Heart right ventricle (tissue), 16 donors: ENCODE measurements at regions of chr4 and their contacts with region 1.

Region 1: DNA sequence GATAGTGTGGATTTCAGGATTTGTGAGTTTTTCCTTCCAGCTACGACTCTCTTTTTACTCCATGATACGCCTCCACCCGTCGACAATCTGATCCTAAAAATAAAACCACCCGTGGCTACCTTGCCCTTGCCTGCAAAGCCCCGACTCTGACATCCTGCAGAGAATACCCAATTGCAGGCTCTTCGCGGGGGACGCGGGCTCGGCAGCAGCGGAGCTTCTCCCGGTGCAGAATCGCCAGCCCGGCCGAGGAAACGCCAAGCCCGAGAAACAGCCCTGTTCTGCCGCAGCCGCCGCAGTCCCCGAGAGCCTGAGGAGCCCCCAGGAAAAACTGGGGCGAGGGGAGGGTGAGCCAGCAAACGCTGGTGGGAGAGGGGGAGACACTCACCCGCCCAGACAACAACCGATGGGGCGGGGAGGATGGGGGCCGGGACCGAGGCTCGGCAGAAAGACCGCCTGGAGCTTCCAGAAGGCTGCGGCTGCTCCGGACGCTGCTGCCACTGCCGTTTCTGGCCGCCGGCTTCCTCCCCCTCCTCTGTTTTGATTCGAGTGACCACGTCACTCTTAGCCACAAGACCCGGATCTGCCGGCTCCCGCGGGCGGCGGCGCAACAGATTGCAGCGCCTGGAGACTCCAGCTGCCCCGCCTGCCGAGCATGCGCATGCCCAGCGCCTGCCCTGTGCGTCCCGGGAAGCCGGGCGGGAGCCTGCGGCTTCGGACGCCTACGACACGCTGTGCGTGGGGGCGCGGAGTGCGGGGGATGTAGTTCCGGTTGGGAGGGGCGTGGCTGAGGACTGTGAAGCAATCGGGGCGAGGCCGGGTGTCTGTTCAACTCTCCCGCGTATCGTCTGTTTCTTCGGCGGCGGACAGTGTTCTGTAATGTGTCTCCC is at the start of gene SMIM14:
- DNase-seq: peak; percentile 98 to 99
- ATAC-seq: peak; percentile 97 to 100 (median 98)
- H3K4me3 ChIP-seq: peak within 1 kb of the TSS; percentile 80 to 95 (median 92)
- H3K27ac ChIP-seq: peak within 1 kb of the TSS; percentile 86 to 99 (median 98)
- H3K4me1 ChIP-seq: peaks cover 0 to 35% (median 27%) of the 10 kb centered on the region in 9 donors
- H3K27me3 ChIP-seq: no peaks in the 10 kb centered on the region
- CTCF ChIP-seq: peak in 4 of 9 donors; percentile 24 to 35 (median 27)
- total RNA-seq, gene SMIM14: 9.3 to 15.2 (median 11.8) TPM

Region 2: DNA sequence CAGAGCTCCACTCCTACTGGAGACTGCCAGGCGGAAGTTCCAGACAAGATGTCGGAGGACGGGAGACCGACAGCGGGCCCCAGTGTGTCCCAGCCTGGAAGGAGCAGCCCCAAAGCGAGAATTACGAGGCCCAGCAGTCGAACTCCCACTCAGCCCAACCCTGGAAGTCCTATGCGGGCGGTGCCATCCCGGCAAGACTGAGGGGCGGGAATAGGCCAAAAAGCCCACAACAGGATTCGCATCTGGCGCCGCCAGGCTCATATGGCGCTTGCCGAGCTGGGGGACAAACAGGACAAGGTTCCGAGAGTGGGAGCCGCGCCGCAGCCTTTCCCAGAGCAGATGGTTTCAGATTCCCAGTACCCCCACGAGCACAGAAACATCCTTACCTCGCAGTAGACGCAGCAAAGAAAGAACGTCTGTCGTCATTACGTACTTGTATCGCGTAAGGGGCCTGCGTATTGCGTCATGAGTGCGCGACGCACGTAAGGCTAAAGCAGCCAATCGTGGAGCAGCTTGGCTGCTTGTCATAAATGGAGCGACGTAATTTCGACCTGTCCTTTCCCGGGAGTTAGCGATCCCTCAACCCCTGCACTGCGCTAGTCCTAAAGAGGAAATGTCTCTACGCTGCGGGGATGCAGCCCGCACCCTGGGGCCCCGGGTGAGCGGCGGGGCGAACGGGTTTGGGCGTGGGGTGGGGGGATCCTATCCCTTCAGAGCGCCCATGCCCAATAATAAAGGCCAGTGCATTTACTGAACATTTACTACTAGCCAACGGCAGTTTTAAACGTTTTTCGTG is 179.9 kb before region 1 on chr4 and contains the starts of genes LIAS and RPL9:
- intact Hi-C with region 1: loop called in 5 of 10 experiments (anchors 5 to 10 kb)
- DNase-seq: peak; percentile 94 to 96
- ATAC-seq: peak; percentile 95 to 98 (median 97)
- H3K4me3 ChIP-seq: peak within 1 kb of the TSS; percentile 73 to 98 (median 80)
- H3K27ac ChIP-seq: peak within 1 kb of the TSS; percentile 71 to 98 (median 93)
- H3K4me1 ChIP-seq: peaks cover 5 to 43% (median 33%) of the 10 kb centered on the region in 9 donors
- H3K27me3 ChIP-seq: no peaks in the 10 kb centered on the region
- CTCF ChIP-seq: no peak
- total RNA-seq, gene LIAS: 16.0 to 32.4 (median 27.0) TPM
- total RNA-seq, gene RPL9: 546 to 1,064 (median 776) TPM

Region 3: DNA sequence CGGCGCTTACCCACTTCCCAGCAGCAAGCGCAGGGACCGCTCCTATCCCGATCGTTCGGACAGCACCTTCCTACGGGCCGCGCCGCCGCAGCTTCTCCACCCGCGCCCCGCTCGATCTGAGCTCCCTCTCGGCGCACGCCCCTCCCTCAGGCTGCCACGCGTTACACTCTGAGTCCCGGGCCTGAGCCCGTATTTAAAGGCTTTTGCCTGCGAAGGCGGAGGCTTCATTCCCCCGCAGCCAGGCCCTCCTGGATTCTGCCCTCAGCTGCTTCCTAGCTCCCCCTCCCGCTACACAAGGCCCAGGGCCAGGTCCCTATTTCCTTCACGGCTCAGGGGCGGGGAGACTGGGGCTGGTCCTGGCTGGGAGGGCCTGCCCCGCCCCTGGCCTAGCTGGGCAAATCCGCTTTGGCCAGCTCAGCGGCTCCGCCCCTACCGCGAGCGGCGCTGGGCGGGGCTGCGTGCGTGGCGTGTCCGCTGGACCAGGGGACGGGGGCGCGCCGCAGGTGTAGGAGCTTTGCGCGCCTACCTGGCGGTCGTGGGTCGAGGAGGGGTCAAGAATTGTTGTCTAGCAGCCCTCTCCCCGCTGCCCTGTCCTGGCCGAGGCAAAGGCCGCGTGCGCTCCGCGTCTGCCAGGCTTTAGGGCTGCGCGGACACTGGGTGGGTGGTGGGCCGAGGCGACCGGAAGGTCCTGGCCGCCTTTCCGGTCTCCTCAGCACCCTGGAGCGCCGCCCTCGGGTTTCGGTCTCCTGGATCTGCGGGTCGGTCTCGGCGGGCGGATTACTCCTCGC is 111.1 kb before region 1 on chr4 and contains the start of gene UGDH:
- intact Hi-C with region 1: loop called in 8 of 10 experiments (anchors 1 to 5 kb)
- DNase-seq: peak; percentile 96 to 97
- ATAC-seq: peak; percentile 98 to 100 (median 99)
- H3K4me3 ChIP-seq: peak within 1 kb of the TSS; percentile 74 to 98 (median 88)
- H3K27ac ChIP-seq: peak within 1 kb of the TSS; percentile 92 to 99 (median 96)
- H3K4me1 ChIP-seq: peaks cover 0 to 31% (median 21%) of the 10 kb centered on the region in 9 donors
- H3K27me3 ChIP-seq: no peaks in the 10 kb centered on the region
- CTCF ChIP-seq: peak in 5 of 9 donors; percentile 2 to 36 (median 26)
- total RNA-seq, gene UGDH: 10.8 to 27.3 (median 12.5) TPM

Region 4: GRCh38 chr4:39763714-39764572 is 125.3 kb after region 1 on chr4:
- intact Hi-C with region 1: no loop called
- DNase-seq: no peak
- ATAC-seq: no peak
- H3K4me3 ChIP-seq: no peak overlapping the region
- H3K27ac ChIP-seq: no peak overlapping the region
- H3K4me1 ChIP-seq: peaks cover 0 to 5% (median 0%) of the 10 kb centered on the region in 9 donors
- H3K27me3 ChIP-seq: no peaks in the 10 kb centered on the region
- CTCF ChIP-seq: no peak